Caco-2 (cell line): ENCODE measurements at regions of chr2 and their contacts with region 1.

Region 1: DNA sequence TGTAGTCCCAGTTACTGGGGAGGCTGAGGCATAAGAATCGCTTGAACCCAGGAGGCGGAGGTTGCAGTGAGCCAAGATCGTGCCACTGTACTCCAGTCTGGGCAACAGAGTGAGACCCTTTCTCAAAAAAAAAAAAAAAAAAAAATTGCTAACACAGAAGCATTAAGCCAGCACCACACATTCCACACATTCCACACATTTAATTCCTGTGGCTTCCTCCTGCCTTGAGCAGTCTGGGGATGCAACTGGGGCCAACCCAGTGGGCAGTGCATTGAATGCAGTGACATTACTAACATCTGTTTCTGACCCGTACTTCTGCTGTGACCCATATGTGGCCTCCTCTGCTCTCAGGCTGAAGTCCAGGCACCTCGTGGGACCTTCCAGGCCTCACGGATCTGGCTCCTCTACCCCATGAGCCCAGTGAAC is 107.0 kb downstream of the BCL2L11 start:
- DNase-seq: peak in 1 of 2 experiments; percentile 33
- H3K4me3 ChIP-seq: no peak overlapping the region
- H3K4me3 Mint-ChIP-seq: no peak overlapping the region
- H3K27ac Mint-ChIP-seq: peak overlapping the region; percentile 30
- H3K4me1 ChIP-seq: peaks cover 11% of the 10 kb centered on the region
- H3K4me1 Mint-ChIP-seq: peaks cover 8% of the 10 kb centered on the region
- H3K27me3 ChIP-seq: no peaks in the 10 kb centered on the region
- H3K27me3 Mint-ChIP-seq: no peaks in the 10 kb centered on the region
- CTCF ChIP-seq: no peak

Region 2: GRCh38 chr2:111100765-111101162 is 127.0 kb before region 1 on chr2:
- CTCF ChIA-PET with region 1: no interaction called
- POLR2A ChIA-PET with region 1: no interaction called
- intact Hi-C with region 1: no loop called
- DNase-seq: no peak
- H3K4me3 ChIP-seq: no peak overlapping the region
- H3K4me3 Mint-ChIP-seq: no peak overlapping the region
- H3K27ac Mint-ChIP-seq: no peak overlapping the region
- H3K4me1 ChIP-seq: no peaks in the 10 kb centered on the region
- H3K4me1 Mint-ChIP-seq: no peaks in the 10 kb centered on the region
- H3K27me3 ChIP-seq: no peaks in the 10 kb centered on the region
- H3K27me3 Mint-ChIP-seq: peaks cover 2% of the 10 kb centered on the region
- CTCF ChIP-seq: no peak

Region 3: DNA sequence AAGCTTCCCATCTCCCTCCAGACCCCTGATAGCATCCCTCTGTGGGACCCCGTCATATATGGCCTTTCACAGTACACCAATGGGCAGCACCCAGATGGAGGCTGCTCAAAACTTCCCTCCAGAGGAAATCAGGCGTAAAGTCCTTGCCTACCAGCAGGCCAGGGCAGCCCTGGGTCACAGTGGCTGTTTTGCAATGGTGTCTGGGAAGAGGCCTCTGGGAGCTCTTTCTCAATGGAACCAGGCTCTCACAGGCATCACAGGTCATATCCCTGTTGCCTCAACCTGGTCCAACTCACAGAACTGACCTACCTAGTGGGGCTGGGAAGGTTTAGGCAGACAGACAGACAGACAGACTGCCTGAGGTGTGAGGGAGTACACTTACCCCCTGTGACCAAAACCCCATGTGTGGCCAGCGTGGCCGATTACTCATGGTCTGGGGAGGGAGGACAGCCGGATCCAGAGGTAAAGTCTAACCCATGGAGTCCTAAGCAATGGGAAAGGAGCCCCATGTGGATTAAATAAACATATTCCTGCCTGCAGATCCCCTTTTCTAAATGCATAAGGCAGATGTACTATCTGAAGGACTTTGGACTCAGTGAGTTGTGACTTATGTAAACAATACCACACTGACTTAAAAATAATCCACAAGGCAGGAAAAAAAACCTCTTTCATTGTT is 48.9 kb before region 1 on chr2:
- CTCF ChIA-PET with region 1: no interaction called
- POLR2A ChIA-PET with region 1: no interaction called
- intact Hi-C with region 1: loop called (anchors 2 kb)
- DNase-seq: peak; percentile 55 to 59
- H3K4me3 ChIP-seq: no peak overlapping the region
- H3K4me3 Mint-ChIP-seq: no peak overlapping the region
- H3K27ac Mint-ChIP-seq: peak overlapping the region; percentile 42
- H3K4me1 ChIP-seq: peaks cover 29% of the 10 kb centered on the region
- H3K4me1 Mint-ChIP-seq: peaks cover 16% of the 10 kb centered on the region
- H3K27me3 ChIP-seq: no peaks in the 10 kb centered on the region
- H3K27me3 Mint-ChIP-seq: no peaks in the 10 kb centered on the region
- CTCF ChIP-seq: no peak